ENCODE measurements at regions of chr11 and their contacts with region 1.

Region 1: GRCh38 chr11:108788565-108789199 is 123.8 kb downstream of the DDX10 start:
- DNase-seq: peak in 1 of 2 experiments; percentile 52
- H3K4me3 ChIP-seq: no peak overlapping the region
- H3K27ac ChIP-seq: no peak overlapping the region
- H3K4me1 ChIP-seq: peaks cover 3 to 6% (median 4%) of the 10 kb centered on the region in 4 experiments
- H3K27me3 ChIP-seq: no peaks in the 10 kb centered on the region
- CTCF ChIP-seq: peak in 2 of 3 experiments; percentile 47 to 66; a peak in 2 of 4 replicates
- EP300 ChIP-seq: no peak
- POLR2A ChIP-seq: no peak
- RAD21 ChIP-seq: peak; percentile 52 to 65

Region 2: DNA sequence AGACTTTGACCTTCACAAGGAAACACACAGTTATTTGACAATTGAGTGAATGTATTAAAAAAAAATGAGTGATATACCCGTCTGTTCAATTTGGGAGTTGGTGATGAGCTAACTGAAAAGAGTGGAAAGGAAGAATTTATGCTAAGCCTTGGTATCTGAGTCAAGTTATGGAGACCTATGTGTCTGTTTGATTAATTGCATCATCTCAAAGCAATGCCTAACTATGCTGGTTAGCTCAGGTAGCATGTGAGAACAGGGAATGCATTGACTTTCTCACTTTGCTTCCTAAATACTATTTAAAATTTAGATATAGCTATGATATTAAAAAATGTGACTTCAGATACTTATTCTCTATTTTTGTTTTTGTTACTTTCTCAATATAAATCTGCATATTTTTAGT is 13.4 kb before region 1 on chr11:
- CTCF ChIA-PET with region 1: interaction called, 12 read pairs
- POLR2A ChIA-PET with region 1: no interaction called
- DNase-seq: no peak
- H3K4me3 ChIP-seq: no peak overlapping the region
- H3K27ac ChIP-seq: no peak overlapping the region
- H3K4me1 ChIP-seq: no peaks in the 10 kb centered on the region
- H3K27me3 ChIP-seq: no peaks in the 10 kb centered on the region
- CTCF ChIP-seq: no peak
- EP300 ChIP-seq: no peak
- POLR2A ChIP-seq: no peak
- RAD21 ChIP-seq: no peak

Region 3: DNA sequence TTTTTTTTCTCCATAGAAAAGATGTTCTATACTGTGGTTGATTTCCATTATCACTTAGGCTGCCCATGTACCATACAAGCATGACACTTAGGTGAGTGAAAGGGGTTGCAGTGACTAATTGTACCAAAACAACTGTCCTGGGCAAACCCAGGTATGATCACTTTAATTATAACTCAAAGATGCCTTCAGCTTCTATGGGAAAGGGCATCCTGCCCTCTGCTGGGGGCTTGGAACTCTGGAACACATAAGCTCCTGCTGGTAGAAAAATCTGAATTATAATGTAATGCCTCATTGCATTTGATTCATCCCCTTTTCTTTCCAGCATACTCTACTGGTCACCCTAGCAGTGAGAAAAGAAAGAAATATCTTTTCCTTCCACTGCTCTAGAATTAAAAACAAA is 82.5 kb after region 1 on chr11:
- CTCF ChIA-PET with region 1: interaction called, 11 read pairs
- POLR2A ChIA-PET with region 1: no interaction called
- DNase-seq: peak in 1 of 2 experiments; percentile 39
- H3K4me3 ChIP-seq: no peak overlapping the region
- H3K27ac ChIP-seq: no peak overlapping the region
- H3K4me1 ChIP-seq: peaks cover 0 to 12% (median 3%) of the 10 kb centered on the region in 4 experiments; a peak in 5 of 7 replicates
- H3K27me3 ChIP-seq: peaks cover 0 to 1% (median 0%) of the 10 kb centered on the region in 4 experiments; a peak in 1 of 7 replicates
- CTCF ChIP-seq: peak; percentile 8 to 62 (median 59)
- EP300 ChIP-seq: no peak
- POLR2A ChIP-seq: no peak
- RAD21 ChIP-seq: peak; percentile 75 to 78

Measured in H1 (cell line).